ENCODE measurements at regions of chr4 and their contacts with region 1.

Region 1: GRCh38 chr4:67746797-67747495 is 7.2 kb downstream of the GNRHR start:
- DNase-seq: no peak
- H3K4me3 ChIP-seq: no peak overlapping the region
- H3K27ac ChIP-seq: no peak overlapping the region
- H3K27me3 ChIP-seq: no peaks in the 10 kb centered on the region
- CTCF ChIP-seq: peak; percentile 53

Region 2: GRCh38 chr4:67700738-67701516 is 46.0 kb before region 1 on chr4 and contains the start of gene UBA6:
- CTCF ChIA-PET with region 1: interaction called, 13 read pairs
- POLR2A ChIA-PET with region 1: no interaction called
- DNase-seq: peak; percentile 92
- H3K4me3 ChIP-seq: peak within 1 kb of the TSS; percentile 78
- H3K27ac ChIP-seq: peak within 1 kb of the TSS; percentile 78
- H3K27me3 ChIP-seq: no peaks in the 10 kb centered on the region
- CTCF ChIP-seq: peak; percentile 40
- polyA plus RNA-seq, gene UBA6: 83.7 and 119 TPM in 2 replicates

Region 3: DNA sequence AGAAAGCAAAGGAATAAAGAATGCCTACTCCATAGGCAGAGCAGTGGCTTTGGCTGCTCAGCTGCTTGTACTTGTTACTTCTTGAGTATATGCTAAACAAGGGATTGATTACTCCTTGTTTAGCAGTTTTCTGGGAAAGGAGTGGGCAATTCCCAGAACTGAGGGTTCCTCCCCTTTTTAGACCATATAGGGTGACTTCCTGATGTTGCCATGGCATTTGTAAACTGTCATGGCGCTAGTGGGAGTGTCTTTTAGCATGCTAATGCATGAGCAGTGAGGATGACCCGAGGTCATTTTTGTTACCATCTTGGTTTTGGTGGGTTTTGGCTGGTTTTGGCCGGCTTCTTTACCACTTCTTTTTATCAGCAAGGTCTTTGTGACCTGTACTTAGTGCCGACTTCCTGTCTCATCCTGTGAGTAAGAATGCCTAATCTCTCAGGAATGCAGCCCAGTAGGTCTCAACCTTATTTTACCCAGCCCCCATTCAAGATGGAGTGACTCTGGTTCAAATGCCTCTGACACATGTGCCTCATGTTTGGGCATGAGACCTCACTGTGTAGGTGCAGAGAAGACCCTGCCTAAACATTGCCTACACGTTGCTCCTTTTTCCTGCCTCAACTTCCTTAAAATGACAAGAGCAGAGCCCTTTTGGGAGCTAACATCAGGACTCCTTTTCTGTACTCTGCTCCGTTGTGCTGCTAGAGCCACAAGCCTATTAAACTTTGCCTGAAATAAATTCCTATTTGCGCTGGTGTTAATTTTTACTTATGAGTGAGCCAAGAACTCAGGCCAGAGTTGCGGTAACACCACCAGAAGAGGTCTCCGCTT is 25.0 kb before region 1 on chr4:
- CTCF ChIA-PET with region 1: interaction called, 28 read pairs
- POLR2A ChIA-PET with region 1: no interaction called
- DNase-seq: no peak
- H3K4me3 ChIP-seq: no peak overlapping the region
- H3K27ac ChIP-seq: no peak overlapping the region
- H3K27me3 ChIP-seq: no peaks in the 10 kb centered on the region
- CTCF ChIP-seq: no peak

Region 4: DNA sequence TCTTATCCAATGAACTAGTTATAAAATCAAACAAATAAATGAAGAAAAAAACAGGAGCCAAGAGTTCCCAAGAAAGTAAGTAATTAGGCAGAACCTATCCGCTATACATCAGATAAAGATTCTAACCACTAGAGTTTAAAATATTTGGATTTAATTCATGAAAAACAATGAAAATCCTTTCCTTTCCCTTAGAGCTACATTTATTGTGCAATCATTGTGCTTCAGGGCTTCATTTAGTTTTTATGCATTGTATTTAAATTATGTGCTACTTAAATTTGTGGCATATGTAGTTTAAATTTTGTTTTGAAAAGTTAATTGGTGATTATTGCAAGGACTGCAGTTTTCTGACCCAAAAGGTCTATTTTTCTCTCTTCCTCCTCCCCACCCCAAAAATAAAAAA is 10.7 kb before region 1 on chr4:
- CTCF ChIA-PET with region 1: interaction called, 25 read pairs
- POLR2A ChIA-PET with region 1: no interaction called
- DNase-seq: no peak
- H3K4me3 ChIP-seq: no peak overlapping the region
- H3K27ac ChIP-seq: no peak overlapping the region
- H3K27me3 ChIP-seq: no peaks in the 10 kb centered on the region
- CTCF ChIP-seq: no peak

Region 5: GRCh38 chr4:67770422-67770821 is 23.5 kb after region 1 on chr4:
- CTCF ChIA-PET with region 1: interaction called, 25 read pairs
- POLR2A ChIA-PET with region 1: no interaction called
- DNase-seq: no peak
- H3K4me3 ChIP-seq: no peak overlapping the region
- H3K27ac ChIP-seq: no peak overlapping the region
- H3K27me3 ChIP-seq: no peaks in the 10 kb centered on the region
- CTCF ChIP-seq: no peak

Region 6: DNA sequence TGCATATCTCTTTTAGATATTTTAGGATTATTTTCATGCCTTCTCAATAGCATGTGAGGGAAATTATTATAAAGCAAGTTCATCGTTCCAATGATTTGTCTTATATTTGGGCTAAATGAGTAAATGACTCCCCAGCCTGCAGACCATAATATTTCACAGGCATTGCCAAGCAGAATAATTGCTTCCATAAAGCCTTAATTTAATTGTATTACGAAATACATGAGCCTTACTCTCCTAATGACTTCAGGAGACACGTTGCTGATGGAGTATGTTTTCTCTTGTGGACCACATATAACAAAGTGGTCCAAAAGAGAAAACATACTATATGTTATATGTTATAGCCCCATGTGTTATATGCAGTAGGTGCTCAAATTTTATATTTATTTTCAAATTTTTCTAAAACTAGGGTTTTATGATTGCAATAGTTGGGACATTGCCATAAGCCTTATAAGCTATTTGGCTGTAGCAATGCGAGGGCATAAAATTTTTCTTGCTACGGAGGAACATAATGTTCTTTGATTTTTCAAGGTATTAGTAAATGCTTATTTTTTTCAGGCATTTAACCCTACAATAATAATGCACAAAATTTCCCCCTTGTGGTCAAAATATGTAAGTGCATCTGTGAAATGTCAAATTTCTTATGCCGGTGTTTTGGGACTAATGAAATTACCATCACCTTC is 163.1 kb after region 1 on chr4:
- CTCF ChIA-PET with region 1: interaction called, 24 read pairs
- POLR2A ChIA-PET with region 1: no interaction called
- DNase-seq: no peak
- H3K4me3 ChIP-seq: no peak overlapping the region
- H3K27ac ChIP-seq: no peak overlapping the region
- H3K27me3 ChIP-seq: no peaks in the 10 kb centered on the region
- CTCF ChIP-seq: peak; percentile 72

Region 7: GRCh38 chr4:68074388-68074787 is 327.4 kb after region 1 on chr4:
- CTCF ChIA-PET with region 1: no interaction called
- POLR2A ChIA-PET with region 1: no interaction called
- DNase-seq: no peak
- H3K4me3 ChIP-seq: no peak overlapping the region
- H3K27ac ChIP-seq: no peak overlapping the region
- H3K27me3 ChIP-seq: no peaks in the 10 kb centered on the region
- CTCF ChIP-seq: no peak

Region 8: DNA sequence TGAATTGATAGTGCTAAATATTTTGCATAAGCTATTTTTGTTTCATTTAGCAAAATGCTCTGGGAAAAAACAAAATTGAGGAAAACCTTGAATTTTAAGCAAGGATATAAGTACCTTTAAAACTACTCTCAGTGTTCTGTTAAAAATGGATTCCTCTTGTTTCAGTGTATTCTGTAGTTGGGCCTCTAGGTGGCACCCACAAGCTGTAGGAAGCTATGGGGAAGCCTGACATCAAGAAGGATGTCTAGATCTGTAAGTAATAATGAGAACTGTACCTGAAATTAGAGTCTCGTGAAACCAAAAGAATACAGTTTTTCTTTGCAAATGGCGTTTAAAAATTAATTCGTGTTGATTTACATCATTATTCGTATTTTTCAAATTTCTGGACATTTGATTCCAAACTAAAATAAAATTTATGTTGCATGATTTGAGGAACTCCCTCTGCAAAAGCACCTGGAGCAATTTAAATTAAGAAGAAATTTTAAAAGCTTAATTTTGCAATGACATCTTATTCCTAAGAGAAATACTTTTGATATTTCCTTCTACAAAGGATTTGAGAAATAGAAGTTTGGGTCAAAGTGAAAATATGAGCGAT is 751.6 kb after region 1 on chr4:
- CTCF ChIA-PET with region 1: no interaction called
- POLR2A ChIA-PET with region 1: no interaction called
- DNase-seq: peak; percentile 37
- H3K4me3 ChIP-seq: no peak overlapping the region
- H3K27ac ChIP-seq: no peak overlapping the region
- H3K27me3 ChIP-seq: no peaks in the 10 kb centered on the region
- CTCF ChIP-seq: peak; percentile 95